HepG2 (cell line): ENCODE measurements at regions of chr1 and their contacts with region 1.

Region 1: DNA sequence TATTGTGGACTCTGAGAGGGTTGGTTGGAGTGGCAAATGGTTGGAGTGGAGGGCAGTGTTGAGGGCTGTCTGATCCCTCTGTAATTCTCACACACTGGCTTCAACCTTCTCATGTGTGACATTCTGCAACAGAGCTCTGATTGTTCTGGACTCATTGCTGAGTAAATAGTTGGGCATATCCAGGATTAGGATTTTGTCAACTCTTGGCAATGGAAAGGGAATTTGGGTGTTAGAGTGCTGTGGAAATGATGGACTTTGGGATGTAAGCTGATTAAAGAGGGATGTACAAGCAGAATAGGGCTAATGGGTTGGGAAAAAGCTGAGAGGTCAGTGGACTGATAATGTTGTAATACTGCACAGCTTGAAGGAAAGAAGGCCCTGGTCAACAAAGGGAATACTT is 16.5 kb downstream of the TLCD4 start:
- DNase-seq: peak; percentile 87
- ATAC-seq: peak; percentile 94
- H3K4me3 ChIP-seq: no peak overlapping the region
- H3K27ac ChIP-seq: peak overlapping the region; percentile 69
- H3K4me1 ChIP-seq: peaks cover 44% of the 10 kb centered on the region
- H3K27me3 ChIP-seq: no peaks in the 10 kb centered on the region
- CTCF ChIP-seq: no peak
- EP300 ChIP-seq: peak in 1 of 2 experiments; percentile 75; a peak in 1 of 4 replicates
- POLR2A ChIP-seq: no peak
- RAD21 ChIP-seq: no peak

Region 2: DNA sequence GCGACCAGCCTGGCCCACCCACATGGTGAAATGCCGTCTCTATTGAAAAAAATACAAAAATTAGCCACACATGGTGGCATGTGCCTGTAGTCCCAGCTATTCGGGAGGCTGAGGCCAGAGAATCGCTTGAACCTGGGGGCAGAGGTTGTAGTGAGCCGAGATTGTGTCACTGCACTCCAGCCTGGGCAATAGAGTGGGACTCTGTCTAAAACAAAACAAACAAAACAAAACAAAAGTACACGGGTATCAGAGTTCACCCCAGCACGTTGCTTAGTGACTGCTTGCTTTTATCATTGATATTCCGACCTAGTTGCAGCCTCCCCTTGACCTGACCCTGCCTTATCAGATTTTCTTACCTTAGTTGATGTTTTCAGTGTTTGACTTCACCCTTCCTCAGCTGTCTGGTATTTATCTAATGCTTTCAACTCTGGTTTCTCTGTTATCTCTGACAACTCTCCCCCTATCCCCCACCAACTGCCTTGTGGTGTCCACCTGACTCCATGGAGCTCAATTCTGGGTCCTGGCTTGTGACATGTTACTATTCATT is 11.5 kb before region 1 on chr1:
- CTCF ChIA-PET with region 1: no interaction called
- POLR2A ChIA-PET with region 1: interaction called, 5 read pairs
- in situ Hi-C with region 1: no loop called
- intact Hi-C with region 1: loop called (anchors 1 kb)
- DNase-seq: peak; percentile 99
- ATAC-seq: peak; percentile 91
- H3K4me3 ChIP-seq: no peak overlapping the region
- H3K27ac ChIP-seq: peak overlapping the region; percentile 96
- H3K4me1 ChIP-seq: peaks cover 72% of the 10 kb centered on the region
- H3K27me3 ChIP-seq: no peaks in the 10 kb centered on the region
- CTCF ChIP-seq: peak; percentile 20; the same call in 1 of the 2 replicates
- EP300 ChIP-seq: peak; percentile 84 to 95; a peak in 3 of 4 replicates
- POLR2A ChIP-seq: peak in 1 of 2 experiments; percentile 36; a peak in 1 of 4 replicates
- RAD21 ChIP-seq: 0 out of 2 replicates have a peak, but pooled peaks have one; percentile 31